ENCODE measurements at regions of chr3 and their contacts with region 1.

Region 1: DNA sequence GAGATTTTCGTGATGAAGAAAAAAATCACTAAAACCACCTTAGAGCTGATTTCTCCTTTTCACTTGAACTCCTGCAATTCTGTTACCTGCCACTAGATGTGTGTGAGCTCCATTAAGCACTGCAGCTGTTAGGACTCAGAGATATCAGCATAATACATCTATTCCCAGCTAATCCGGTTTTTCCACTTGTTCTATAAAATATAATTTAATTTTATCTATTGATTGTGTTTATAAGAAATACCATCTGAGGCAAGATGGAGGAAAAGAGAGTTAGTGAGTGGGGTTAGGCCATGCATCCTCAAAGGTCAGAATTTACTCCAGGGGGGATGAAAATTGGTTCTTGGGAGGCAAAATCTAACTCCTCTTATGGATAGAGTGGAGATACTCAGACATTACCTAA is 152.7 kb downstream of the IL20RB start:
- DNase-seq: no peak
- ATAC-seq: no peak
- H3K4me3 ChIP-seq: no peak overlapping the region
- H3K4me3 Mint-ChIP-seq: no peak overlapping the region
- H3K27ac ChIP-seq: no peak overlapping the region
- H3K27ac Mint-ChIP-seq: no peak overlapping the region
- H3K4me1 ChIP-seq: peaks cover 2% of the 10 kb centered on the region in 2 donors
- H3K4me1 Mint-ChIP-seq: no peaks in the 10 kb centered on the region
- H3K27me3 ChIP-seq: peaks cover 0 to 6% (median 3%) of the 10 kb centered on the region in 4 experiments
- H3K27me3 Mint-ChIP-seq: peaks cover 15% of the 10 kb centered on the region
- CTCF ChIP-seq: peak; percentile 75

Region 2: GRCh38 chr3:137099364-137100219 is 10.9 kb before region 1 on chr3:
- CTCF ChIA-PET with region 1: interaction called, 28 read pairs
- POLR2A ChIA-PET with region 1: no interaction called
- intact Hi-C with region 1: no loop called
- DNase-seq: no peak
- ATAC-seq: no peak
- H3K4me3 ChIP-seq: no peak overlapping the region
- H3K4me3 Mint-ChIP-seq: no peak overlapping the region
- H3K27ac ChIP-seq: no peak overlapping the region
- H3K27ac Mint-ChIP-seq: no peak overlapping the region
- H3K4me1 ChIP-seq: no peaks in the 10 kb centered on the region
- H3K4me1 Mint-ChIP-seq: no peaks in the 10 kb centered on the region
- H3K27me3 ChIP-seq: peaks cover 0 to 2% (median 0%) of the 10 kb centered on the region in 4 experiments
- H3K27me3 Mint-ChIP-seq: peaks cover 24% of the 10 kb centered on the region
- CTCF ChIP-seq: no peak

Region 3: DNA sequence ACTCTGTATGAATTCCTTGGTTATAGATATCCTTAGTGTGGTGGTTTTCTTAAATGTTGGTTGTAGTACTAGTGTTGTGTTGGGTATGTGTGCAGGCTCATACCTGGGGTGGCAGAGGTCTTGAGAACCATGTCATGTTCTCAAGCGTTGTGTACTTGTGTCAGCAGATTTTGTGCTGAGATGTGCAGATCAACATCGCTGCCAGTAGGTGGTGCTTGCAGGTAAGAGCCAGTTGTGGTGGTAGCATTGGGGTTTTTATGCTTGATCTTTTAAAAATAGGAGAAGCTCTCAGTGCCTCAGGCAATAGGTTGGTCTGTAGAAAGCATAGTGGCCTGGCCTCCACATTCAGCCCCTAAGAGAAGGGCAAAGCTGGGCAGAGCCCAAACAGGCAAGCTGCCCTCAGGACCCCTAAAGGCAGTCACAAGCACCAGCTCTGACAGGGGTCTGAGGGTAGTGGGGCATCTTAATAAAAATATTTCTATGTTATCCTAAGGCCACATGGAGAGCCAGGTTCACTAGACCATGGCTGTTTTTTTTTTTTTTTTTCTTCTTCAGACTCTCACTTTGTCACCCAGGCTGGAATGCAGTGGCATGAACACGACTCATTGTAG is 11.3 kb after region 1 on chr3:
- CTCF ChIA-PET with region 1: interaction called, 10 read pairs
- POLR2A ChIA-PET with region 1: no interaction called
- intact Hi-C with region 1: no loop called
- DNase-seq: no peak
- ATAC-seq: no peak
- H3K4me3 ChIP-seq: no peak overlapping the region
- H3K4me3 Mint-ChIP-seq: no peak overlapping the region
- H3K27ac ChIP-seq: no peak overlapping the region
- H3K27ac Mint-ChIP-seq: no peak overlapping the region
- H3K4me1 ChIP-seq: no peaks in the 10 kb centered on the region
- H3K4me1 Mint-ChIP-seq: no peaks in the 10 kb centered on the region
- H3K27me3 ChIP-seq: no peaks in the 10 kb centered on the region
- H3K27me3 Mint-ChIP-seq: peaks cover 27% of the 10 kb centered on the region
- CTCF ChIP-seq: peak; percentile 35

Measured in B cell (primary cell).